Posterior vena cava (tissue), 2 donors: ENCODE measurements at regions of chr15 and their contacts with region 1.

Region 1: DNA sequence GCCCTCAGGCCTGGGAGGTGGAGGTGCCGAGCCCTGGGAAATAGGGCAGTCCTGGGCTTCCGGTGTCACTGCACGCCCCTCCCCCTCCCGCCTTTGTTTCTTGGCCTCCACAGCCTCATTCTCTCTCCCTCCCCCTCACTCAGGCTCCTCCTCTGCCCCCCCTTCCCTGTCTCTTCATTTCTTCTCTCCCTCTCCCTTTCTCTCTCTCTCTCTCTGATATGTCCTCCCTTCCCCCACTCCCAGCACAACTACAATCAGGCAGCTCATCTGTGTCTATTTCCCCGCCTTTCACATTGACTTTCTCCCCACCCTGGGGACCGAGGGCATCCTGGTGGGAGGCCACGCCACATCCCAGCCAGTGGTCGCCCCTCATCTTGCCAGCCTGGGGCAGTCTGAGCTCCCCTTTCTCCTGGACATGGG is 40.2 kb downstream of the IDH2 start:
- DNase-seq: no peak

Region 2: GRCh38 chr15:89904519-89904918 is 157.5 kb before region 1 on chr15:
- intact Hi-C with region 1: loop called in 1 of 2 experiments (anchors 5 kb)
- DNase-seq: no peak